Naive thymus-derived CD4-positive, alpha-beta T cell (primary cell): ENCODE measurements at regions of chr1 and their contacts with region 1.

Region 1: DNA sequence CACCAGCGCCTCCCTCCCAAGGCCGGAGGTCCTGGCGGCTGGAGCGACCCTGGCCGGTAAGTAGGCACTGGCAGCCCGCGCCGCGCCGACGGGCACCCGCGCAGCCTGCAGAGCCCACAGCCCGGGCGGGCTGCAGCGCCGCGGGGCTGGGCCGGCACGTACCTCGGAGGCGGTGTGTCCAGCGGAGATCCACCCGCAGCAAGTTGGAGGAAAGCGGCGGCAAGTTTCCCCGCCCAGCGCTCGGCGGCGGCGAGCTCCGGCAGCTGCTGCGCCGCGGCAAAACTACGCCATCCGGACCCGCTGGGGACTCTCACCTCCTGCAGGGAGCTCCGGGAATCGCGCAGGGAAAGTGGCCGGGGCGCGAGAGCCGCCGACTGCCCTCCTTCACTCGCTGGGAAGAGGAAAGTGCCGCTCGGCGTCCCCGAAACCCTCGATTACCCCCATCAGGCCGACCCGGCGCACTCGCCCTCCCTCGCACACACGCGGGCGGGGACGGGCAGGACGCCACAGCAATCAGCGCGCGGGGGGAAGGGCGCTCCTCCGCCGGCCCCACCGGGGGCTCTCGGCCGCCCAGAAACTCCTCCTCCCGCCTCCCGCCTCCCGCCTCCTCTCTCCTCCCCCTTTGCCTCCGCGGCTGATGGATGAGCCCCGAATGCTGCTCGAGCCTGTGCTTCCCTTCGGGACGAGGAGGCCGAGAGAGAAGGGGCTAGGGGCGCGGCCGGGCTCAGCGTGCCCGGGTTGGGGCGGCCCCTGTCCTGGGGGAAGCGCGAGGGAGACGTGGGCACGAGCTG is at the start of gene TGFBR3:
- DNase-seq: peak; percentile 61 to 79 (median 73)
- ATAC-seq: peak; percentile 84
- H3K4me3 ChIP-seq: peak within 1 kb of the TSS; percentile 54
- H3K4me3 Mint-ChIP-seq: peak within 1 kb of the TSS; percentile 86 to 99 (median 94)
- H3K27ac ChIP-seq: peak within 1 kb of the TSS; percentile 68
- H3K27ac Mint-ChIP-seq: peak within 1 kb of the TSS; percentile 78 to 94 (median 85)
- H3K4me1 ChIP-seq: peaks cover 12 to 15% of the 10 kb centered on the region in 2 donors
- H3K4me1 Mint-ChIP-seq: peaks cover 21 to 43% (median 27%) of the 10 kb centered on the region in 7 donors
- H3K27me3 ChIP-seq: no peaks in the 10 kb centered on the region
- H3K27me3 Mint-ChIP-seq: peaks cover 0 to 42% (median 0%) of the 10 kb centered on the region in 5 donors
- total RNA-seq, gene TGFBR3: 10.1 to 36.3 (median 18.5) TPM

Region 2: GRCh38 chr1:91021686-91022517 is 864.0 kb before region 1 on chr1 and contains the start of gene ZNF644:
- CTCF ChIA-PET with region 1: no interaction called
- POLR2A ChIA-PET with region 1: no interaction called
- intact Hi-C with region 1: loop called in 1 of 2 experiments (anchors 10 kb)
- DNase-seq: peak; percentile 81 to 95 (median 93)
- ATAC-seq: peak; percentile 91
- H3K4me3 ChIP-seq: peak within 1 kb of the TSS; percentile 62
- H3K4me3 Mint-ChIP-seq: peak within 1 kb of the TSS; percentile 90 to 97 (median 96)
- H3K27ac ChIP-seq: peak within 1 kb of the TSS; percentile 99
- H3K27ac Mint-ChIP-seq: peak within 1 kb of the TSS; percentile 95 to 100 (median 98)
- H3K4me1 ChIP-seq: peaks cover 37 to 45% of the 10 kb centered on the region in 2 donors
- H3K4me1 Mint-ChIP-seq: peaks cover 37 to 83% (median 68%) of the 10 kb centered on the region in 7 donors
- H3K27me3 ChIP-seq: no peaks in the 10 kb centered on the region
- H3K27me3 Mint-ChIP-seq: peaks cover 0 to 2% (median 0%) of the 10 kb centered on the region in 5 donors
- total RNA-seq, gene ZNF644: 63.5 to 117 (median 85.2) TPM

Region 3: GRCh38 chr1:91555821-91556531 is 329.9 kb before region 1 on chr1:
- CTCF ChIA-PET with region 1: interaction called, 3 read pairs
- POLR2A ChIA-PET with region 1: no interaction called
- intact Hi-C with region 1: loop called in 1 of 2 experiments (anchors 5 kb)
- DNase-seq: peak in 8 of 9 donors; percentile 56 to 86 (median 76)
- ATAC-seq: peak; percentile 93
- H3K4me3 ChIP-seq: no peak overlapping the region
- H3K4me3 Mint-ChIP-seq: peak overlapping the region in 7 of 10 donors; percentile 12 to 63 (median 45)
- H3K27ac ChIP-seq: peak overlapping the region; percentile 29
- H3K27ac Mint-ChIP-seq: peak overlapping the region; percentile 50 to 97 (median 85)
- H3K4me1 ChIP-seq: peaks cover 35 to 94% of the 10 kb centered on the region in 2 donors
- H3K4me1 Mint-ChIP-seq: peaks cover 41 to 92% (median 57%) of the 10 kb centered on the region in 7 donors
- H3K27me3 ChIP-seq: no peaks in the 10 kb centered on the region
- H3K27me3 Mint-ChIP-seq: peaks cover 0 to 3% (median 0%) of the 10 kb centered on the region in 5 donors

Region 4: DNA sequence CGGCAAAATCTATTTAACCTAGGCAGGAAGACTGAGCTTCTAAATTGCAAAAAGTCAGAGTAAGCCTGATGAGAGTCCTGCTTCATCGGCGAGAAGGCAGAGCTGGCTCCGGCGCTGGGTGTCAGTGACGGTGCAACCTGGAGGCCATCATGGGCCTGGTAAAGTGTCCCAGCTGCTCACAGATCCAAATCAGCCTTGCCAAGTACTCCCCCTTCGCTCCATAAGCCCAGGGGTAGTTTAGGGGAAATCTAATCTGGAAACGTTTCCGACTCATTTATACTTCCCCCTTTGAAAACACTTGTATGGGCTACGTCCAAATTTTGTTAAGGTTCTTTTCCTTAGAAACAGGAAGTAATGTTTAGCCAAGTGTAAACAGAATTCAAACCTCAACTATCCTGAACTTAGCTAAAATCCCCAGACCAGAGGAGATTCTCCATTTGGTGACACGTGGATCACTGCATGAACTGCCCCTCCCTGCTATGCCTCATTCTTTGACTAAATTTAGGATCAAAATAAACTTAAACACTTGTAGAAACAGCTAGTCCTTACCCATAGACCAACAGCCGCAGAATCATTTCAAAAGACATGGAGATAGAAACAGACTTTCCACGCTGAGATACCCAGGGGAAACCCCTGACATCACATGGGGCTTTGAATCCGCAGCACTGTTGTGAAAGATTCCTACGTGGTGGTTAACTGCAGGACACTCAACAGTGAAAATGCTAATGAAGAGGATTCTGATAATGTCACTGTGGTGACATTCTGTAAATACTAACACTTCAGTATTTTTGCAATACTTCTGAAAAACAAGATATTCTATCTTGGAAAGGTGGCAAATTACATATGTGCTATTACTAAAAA is 172.7 kb before region 1 on chr1:
- CTCF ChIA-PET with region 1: no interaction called
- POLR2A ChIA-PET with region 1: no interaction called
- intact Hi-C with region 1: loop called in 1 of 2 experiments (anchors 5 kb)
- DNase-seq: peak in 1 of 9 donors; percentile 60
- ATAC-seq: peak; percentile 86
- H3K4me3 ChIP-seq: no peak overlapping the region
- H3K4me3 Mint-ChIP-seq: peak overlapping the region in 3 of 10 donors; percentile 37 to 57 (median 48)
- H3K27ac ChIP-seq: no peak overlapping the region
- H3K27ac Mint-ChIP-seq: peak overlapping the region in 3 of 9 donors; percentile 24 to 71 (median 66)
- H3K4me1 ChIP-seq: peaks cover 0 to 16% of the 10 kb centered on the region in 2 donors
- H3K4me1 Mint-ChIP-seq: peaks cover 0 to 48% (median 11%) of the 10 kb centered on the region in 7 donors
- H3K27me3 ChIP-seq: no peaks in the 10 kb centered on the region
- H3K27me3 Mint-ChIP-seq: no peaks in the 10 kb centered on the region

Region 5: DNA sequence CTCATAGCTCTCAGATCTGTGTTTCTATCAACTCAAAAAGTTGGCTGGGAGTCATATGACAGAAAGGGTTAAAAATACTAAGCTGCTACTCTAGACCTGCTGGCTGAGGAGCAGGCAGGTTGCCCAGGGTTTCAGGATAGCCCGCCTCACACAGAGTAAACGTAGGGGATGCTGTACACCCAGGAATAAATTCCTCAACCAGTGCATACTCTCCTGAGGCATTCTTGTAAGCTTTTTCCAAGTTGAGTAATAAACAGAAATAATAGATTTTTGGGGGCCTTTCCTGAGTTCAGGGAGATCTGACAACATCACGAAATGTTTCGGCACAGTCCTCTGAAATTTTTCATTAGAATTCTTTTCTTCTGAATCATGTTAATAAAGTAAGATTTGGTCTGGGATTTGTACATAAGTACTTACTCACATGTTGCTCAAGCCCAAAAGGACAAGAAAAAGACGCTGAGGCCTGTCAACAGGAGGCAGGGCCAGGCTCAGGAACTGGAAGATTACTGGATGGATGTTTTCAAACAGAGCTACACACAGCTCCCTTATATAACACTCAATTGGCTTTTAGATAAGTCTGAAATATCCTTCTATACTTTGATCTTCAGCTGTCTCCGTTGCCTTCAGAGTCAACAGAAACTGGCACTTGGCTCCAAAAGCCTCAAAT is 40.9 kb before region 1 on chr1:
- CTCF ChIA-PET with region 1: no interaction called
- POLR2A ChIA-PET with region 1: no interaction called
- intact Hi-C with region 1: no loop called
- DNase-seq: no peak
- ATAC-seq: no peak
- H3K4me3 ChIP-seq: no peak overlapping the region
- H3K4me3 Mint-ChIP-seq: no peak overlapping the region
- H3K27ac ChIP-seq: no peak overlapping the region
- H3K27ac Mint-ChIP-seq: no peak overlapping the region
- H3K4me1 ChIP-seq: peaks cover 0 to 6% of the 10 kb centered on the region in 2 donors
- H3K4me1 Mint-ChIP-seq: peaks cover 0 to 31% (median 10%) of the 10 kb centered on the region in 7 donors
- H3K27me3 ChIP-seq: no peaks in the 10 kb centered on the region
- H3K27me3 Mint-ChIP-seq: peaks cover 0 to under 1% (median 0%) of the 10 kb centered on the region in 5 donors

Region 6: GRCh38 chr1:91872560-91873081 is 13.3 kb before region 1 on chr1:
- CTCF ChIA-PET with region 1: no interaction called
- POLR2A ChIA-PET with region 1: interaction called, 5 read pairs
- intact Hi-C with region 1: loop called in 1 of 2 experiments (anchors 1 kb)
- DNase-seq: peak in 4 of 9 donors; percentile 8 to 37 (median 14)
- ATAC-seq: peak; percentile 40
- H3K4me3 ChIP-seq: no peak overlapping the region
- H3K4me3 Mint-ChIP-seq: peak overlapping the region; percentile 32 to 86 (median 76)
- H3K27ac ChIP-seq: no peak overlapping the region
- H3K27ac Mint-ChIP-seq: peak overlapping the region in 7 of 9 donors; percentile 17 to 90 (median 65)
- H3K4me1 ChIP-seq: peaks cover 29 to 56% of the 10 kb centered on the region in 2 donors
- H3K4me1 Mint-ChIP-seq: peaks cover 21 to 72% (median 58%) of the 10 kb centered on the region in 7 donors
- H3K27me3 ChIP-seq: no peaks in the 10 kb centered on the region
- H3K27me3 Mint-ChIP-seq: peaks cover 0 to 37% (median 0%) of the 10 kb centered on the region in 5 donors

Region 7: DNA sequence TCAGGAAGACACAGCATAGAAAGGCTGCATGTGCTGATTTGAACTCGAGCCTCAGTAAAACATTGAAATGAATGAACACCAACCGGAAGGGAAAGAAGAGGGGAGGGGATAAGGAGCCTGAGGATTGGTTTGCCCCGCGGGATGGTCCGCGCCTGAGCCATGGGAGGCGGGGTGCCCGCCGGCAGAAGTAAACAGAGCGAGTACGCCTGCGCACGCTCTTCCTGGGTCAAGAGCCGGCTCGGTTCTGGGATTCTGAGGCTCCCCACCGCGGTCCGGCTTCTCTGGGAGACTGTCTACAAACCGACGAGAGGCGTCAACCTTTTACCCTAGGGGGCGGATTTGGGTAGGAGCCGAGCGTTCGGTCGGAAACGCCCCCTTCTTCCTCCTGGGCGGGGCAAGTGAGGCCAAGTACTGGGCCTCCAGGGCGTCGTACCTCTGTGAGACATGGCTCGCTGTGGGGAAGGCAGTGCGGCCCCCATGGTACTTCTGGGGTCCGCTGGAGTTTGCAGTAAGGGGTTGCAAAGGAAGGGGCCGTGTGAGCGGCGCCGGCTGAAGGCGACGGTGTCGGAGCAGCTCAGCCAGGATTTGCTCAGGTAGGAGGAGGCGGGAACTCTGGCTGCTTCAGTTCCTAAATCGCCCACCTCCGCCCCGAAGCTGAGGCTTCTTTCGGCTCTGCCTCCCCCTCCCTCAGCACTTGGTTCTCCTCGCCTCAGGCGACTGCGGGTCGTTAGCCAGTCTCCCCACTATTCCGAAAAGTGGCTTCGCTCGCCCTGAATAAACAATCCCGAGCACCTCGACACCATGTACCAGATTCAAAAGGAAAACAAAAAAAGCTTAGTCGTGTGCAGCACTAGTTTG is 194.4 kb after region 1 on chr1 and contains the start of gene BTBD8:
- CTCF ChIA-PET with region 1: no interaction called
- POLR2A ChIA-PET with region 1: no interaction called
- intact Hi-C with region 1: loop called in 1 of 2 experiments (anchors 1 kb)
- DNase-seq: peak; percentile 67 to 87 (median 85)
- ATAC-seq: peak; percentile 98
- H3K4me3 ChIP-seq: peak within 1 kb of the TSS; percentile 79
- H3K4me3 Mint-ChIP-seq: peak within 1 kb of the TSS; percentile 87 to 99 (median 98)
- H3K27ac ChIP-seq: peak within 1 kb of the TSS; percentile 74
- H3K27ac Mint-ChIP-seq: peak within 1 kb of the TSS; percentile 85 to 97 (median 93)
- H3K4me1 ChIP-seq: peaks cover 0 to 3% of the 10 kb centered on the region in 2 donors
- H3K4me1 Mint-ChIP-seq: peaks cover 5 to 36% (median 29%) of the 10 kb centered on the region in 7 donors
- H3K27me3 ChIP-seq: no peaks in the 10 kb centered on the region
- H3K27me3 Mint-ChIP-seq: no peaks in the 10 kb centered on the region
- total RNA-seq, gene BTBD8: 2.4 to 11.4 (median 5.3) TPM

Region 8: GRCh38 chr1:92123868-92124267 is 238.0 kb after region 1 on chr1:
- CTCF ChIA-PET with region 1: no interaction called
- POLR2A ChIA-PET with region 1: no interaction called
- intact Hi-C with region 1: no loop called
- DNase-seq: peak in 1 of 9 donors; percentile 2
- ATAC-seq: no peak
- H3K4me3 ChIP-seq: no peak overlapping the region
- H3K4me3 Mint-ChIP-seq: peak overlapping the region in 9 of 10 donors; percentile 27 to 69 (median 51)
- H3K27ac ChIP-seq: no peak overlapping the region
- H3K27ac Mint-ChIP-seq: peak overlapping the region in 1 of 9 donors; percentile 7
- H3K4me1 ChIP-seq: no peaks in the 10 kb centered on the region
- H3K4me1 Mint-ChIP-seq: peaks cover 0 to 18% (median 8%) of the 10 kb centered on the region in 7 donors
- H3K27me3 ChIP-seq: no peaks in the 10 kb centered on the region
- H3K27me3 Mint-ChIP-seq: no peaks in the 10 kb centered on the region